Tibial artery (tissue), 4 donors: ENCODE measurements at regions of chr11 and their contacts with region 1.

Region 1: DNA sequence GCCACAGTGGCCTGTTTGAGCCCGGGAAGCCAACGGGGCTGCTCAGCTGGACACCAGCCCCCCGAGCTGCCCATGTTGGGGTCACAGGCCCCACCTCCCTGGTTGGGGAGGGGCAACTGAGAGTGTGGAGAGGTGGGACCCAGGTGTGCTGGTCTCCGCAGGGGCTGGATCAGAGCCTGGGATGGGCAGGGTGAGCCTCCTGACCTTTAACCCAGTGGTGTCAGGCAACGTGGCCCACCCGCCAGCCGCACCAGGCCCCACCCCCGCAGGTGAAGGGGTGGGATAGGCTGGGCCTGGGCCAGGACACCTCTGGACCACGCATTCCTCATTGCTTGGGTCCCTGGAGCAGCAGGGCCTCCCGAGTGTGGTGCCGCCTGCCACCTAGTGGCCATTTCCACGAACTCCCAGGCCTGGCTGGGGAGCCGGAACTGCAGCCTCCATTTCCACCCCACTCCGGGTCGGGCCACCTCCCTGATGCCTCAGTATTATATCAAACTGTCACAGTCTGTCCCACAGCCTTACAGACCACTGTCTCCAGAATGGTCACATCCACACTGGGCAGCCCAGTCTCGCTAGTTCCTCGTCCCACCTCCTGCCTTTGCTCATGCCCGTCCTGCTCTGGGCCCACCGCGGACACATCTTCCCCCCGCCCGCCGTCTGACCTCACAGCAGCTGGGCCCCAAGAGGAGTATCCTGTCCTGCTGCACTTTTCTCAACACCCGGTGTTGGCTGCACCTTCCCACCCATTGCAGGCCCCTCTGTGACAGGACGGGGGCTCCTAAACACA is 13.3 kb upstream of the PPP6R3 start:
- DNase-seq: peak; percentile 60 to 84
- H3K4me3 ChIP-seq: no peak overlapping the region
- H3K27ac ChIP-seq: peak overlapping the region in 1 of 2 donors; percentile 13
- H3K4me1 ChIP-seq: no peaks in the 10 kb centered on the region
- H3K27me3 ChIP-seq: no peaks in the 10 kb centered on the region
- CTCF ChIP-seq: peak; percentile 92 to 97

Region 2: GRCh38 chr11:68206187-68206601 is 241.0 kb before region 1 on chr11:
- intact Hi-C with region 1: loop called (anchors 5 kb)
- DNase-seq: no peak
- H3K4me3 ChIP-seq: no peak overlapping the region
- H3K27ac ChIP-seq: no peak overlapping the region
- H3K4me1 ChIP-seq: peaks cover 0 to 73% (median 33%) of the 10 kb centered on the region in 4 donors
- H3K27me3 ChIP-seq: no peaks in the 10 kb centered on the region
- CTCF ChIP-seq: peak; percentile 77 to 81

Region 3: DNA sequence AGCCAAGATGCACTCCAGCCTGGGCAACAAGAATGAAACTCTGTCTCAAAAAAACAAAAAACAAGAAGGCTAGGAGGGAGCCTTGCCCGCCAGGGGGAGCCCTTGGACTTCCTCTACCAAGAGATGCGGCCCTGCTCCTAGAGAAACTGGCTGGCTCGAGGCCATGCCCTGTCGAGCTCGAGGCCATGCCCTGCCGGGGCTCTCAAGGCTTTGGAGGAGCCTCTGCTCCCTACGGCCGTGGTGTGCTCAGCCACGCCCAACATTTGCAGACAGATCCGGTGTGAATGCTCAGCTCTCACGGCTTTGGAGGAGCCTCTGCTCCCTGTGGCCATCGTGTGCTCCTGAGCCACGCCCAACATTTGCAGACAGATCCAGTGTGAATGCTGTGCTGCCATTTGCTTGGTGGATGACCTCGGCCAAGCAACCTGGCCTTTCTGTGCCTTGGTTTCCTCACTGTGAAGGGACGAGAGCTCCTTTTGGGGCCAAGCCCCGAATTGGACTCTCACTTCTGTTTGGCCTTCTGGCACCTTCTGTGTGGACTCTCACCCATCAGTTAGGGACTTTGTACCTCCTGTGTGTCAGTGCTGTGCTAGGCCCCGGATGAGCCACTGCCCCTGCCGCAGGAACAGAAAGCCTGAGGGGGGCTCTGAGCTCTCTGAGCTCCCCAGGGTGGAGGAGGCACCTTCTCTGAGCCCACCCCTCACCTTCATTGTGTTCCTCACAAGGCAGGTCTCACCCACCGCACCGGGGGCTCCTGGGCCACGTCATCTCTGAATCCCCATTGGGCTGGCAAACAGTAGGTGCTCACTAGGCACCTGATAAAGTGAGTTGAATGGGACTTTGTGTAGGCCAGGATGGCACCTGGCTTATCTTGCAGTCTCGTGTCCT is 189.5 kb before region 1 on chr11:
- intact Hi-C with region 1: loop called (anchors 5 kb)
- DNase-seq: peak; percentile 95 to 97
- H3K4me3 ChIP-seq: peak overlapping the region; percentile 2 to 19
- H3K27ac ChIP-seq: peak overlapping the region in 1 of 2 donors; percentile 46
- H3K4me1 ChIP-seq: peaks cover 0 to 17% (median 6%) of the 10 kb centered on the region in 4 donors
- H3K27me3 ChIP-seq: no peaks in the 10 kb centered on the region
- CTCF ChIP-seq: peak; percentile 88 to 97

Region 4: DNA sequence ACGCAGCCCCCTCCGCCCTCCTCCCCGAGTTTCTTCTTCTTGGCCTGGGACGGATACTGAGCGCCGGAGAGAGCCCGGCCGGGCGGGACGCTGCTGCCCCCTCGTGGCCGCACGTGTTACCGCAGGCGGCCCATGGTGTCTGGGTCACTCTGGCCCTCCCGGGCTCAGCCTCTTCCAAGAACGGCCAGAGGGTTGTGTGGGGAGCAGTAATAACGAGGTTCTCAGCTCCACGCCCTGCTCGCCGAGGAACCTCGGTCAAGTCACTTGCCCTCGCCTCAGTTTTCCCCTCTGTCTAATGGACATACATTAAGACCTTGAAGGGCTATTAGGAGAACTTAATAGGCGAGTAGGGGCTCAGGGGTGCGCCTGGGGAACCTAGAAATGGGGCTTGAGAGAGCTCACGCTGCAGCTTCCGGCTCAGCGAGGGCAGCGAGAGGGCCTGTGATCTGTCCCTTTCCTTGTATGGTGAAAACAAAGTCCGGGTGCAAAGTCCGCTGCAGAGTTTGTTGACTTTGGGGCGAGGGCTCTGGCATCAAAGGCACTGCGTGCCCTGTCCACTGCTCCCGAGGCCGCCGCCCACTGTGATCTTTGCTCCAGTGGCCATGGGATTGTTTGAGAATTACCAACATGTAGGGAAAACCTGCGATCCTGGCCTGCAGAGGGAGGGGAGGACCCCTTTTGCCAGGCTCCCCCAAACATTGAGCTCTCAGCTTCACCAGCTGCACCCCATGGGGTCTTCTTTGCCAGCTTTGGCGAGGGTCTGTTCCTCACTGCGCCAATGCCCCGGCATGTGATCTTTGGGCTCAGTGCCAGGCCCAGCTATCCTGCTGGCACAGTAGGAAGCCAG is 149.2 kb before region 1 on chr11:
- intact Hi-C with region 1: loop called (anchors 10 kb)
- DNase-seq: peak; percentile 51 to 85
- H3K4me3 ChIP-seq: no peak overlapping the region
- H3K27ac ChIP-seq: no peak overlapping the region
- H3K4me1 ChIP-seq: peaks cover 0 to 18% (median 7%) of the 10 kb centered on the region in 4 donors
- H3K27me3 ChIP-seq: no peaks in the 10 kb centered on the region
- CTCF ChIP-seq: peak; percentile 96 to 100

Region 5: GRCh38 chr11:68383976-68384501 is 63.2 kb before region 1 on chr11:
- intact Hi-C with region 1: loop called (anchors 10 kb)
- DNase-seq: peak; percentile 71 to 81
- H3K4me3 ChIP-seq: no peak overlapping the region
- H3K27ac ChIP-seq: peak overlapping the region; percentile 82 to 94
- H3K4me1 ChIP-seq: peaks cover 0 to 55% (median 49%) of the 10 kb centered on the region in 4 donors
- H3K27me3 ChIP-seq: no peaks in the 10 kb centered on the region
- CTCF ChIP-seq: peak; percentile 93 to 94